ENCODE measurements at regions of chr1 and their contacts with region 1.

Region 1: GRCh38 chr1:113898241-113898814 is 6.3 kb downstream of the AP4B1 start:
- DNase-seq: no peak
- H3K4me3 ChIP-seq: no peak overlapping the region
- H3K27ac ChIP-seq: peak overlapping the region; percentile 62 to 65
- H3K4me1 ChIP-seq: peaks cover 0 to 20% (median 6%) of the 10 kb centered on the region in 4 donors
- H3K27me3 ChIP-seq: no peaks in the 10 kb centered on the region
- CTCF ChIP-seq: no peak

Region 2: GRCh38 chr1:113849060-113849459 is 49.3 kb before region 1 on chr1:
- intact Hi-C with region 1: loop called (anchors 10 kb)
- DNase-seq: no peak
- H3K4me3 ChIP-seq: no peak overlapping the region
- H3K27ac ChIP-seq: no peak overlapping the region
- H3K4me1 ChIP-seq: no peaks in the 10 kb centered on the region
- H3K27me3 ChIP-seq: no peaks in the 10 kb centered on the region
- CTCF ChIP-seq: no peak

Measured in tibial artery (tissue), 4 donors.